Caco-2 (cell line): ENCODE measurements at regions of chr10 and their contacts with region 1.

Region 1: DNA sequence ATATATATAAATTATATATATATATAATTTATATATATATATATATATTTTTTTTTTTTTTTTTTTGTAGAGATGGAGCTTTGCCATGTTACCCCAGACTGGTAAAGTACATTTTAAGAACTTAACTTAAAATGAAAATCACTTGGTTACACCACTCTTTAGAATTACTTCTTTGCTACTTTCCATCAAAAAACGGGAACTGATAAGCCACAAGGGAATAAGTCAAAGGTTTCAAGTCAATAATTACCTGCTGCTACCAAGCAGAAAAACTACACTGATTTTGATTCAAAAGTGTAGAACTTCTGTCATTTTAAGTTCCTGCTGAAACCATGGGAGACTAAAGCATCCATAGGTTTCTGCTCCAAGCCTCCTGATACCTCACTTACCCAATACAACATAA is 12.2 kb downstream of the PPA1 start:
- DNase-seq: no peak
- H3K4me3 ChIP-seq: no peak overlapping the region
- H3K4me3 Mint-ChIP-seq: no peak overlapping the region
- H3K27ac Mint-ChIP-seq: peak overlapping the region; percentile 19
- H3K4me1 ChIP-seq: peaks cover 12% of the 10 kb centered on the region; the same call in 1 of the 2 replicates
- H3K4me1 Mint-ChIP-seq: peaks cover 14% of the 10 kb centered on the region
- H3K27me3 ChIP-seq: no peaks in the 10 kb centered on the region
- H3K27me3 Mint-ChIP-seq: no peaks in the 10 kb centered on the region
- CTCF ChIP-seq: no peak

Region 2: GRCh38 chr10:70233109-70233938 is 12.3 kb after region 1 on chr10 and contains the start of gene PPA1:
- CTCF ChIA-PET with region 1: interaction called, 80 read pairs
- POLR2A ChIA-PET with region 1: interaction called, 12 read pairs
- intact Hi-C with region 1: no loop called
- DNase-seq: peak; percentile 99 to 100
- H3K4me3 ChIP-seq: peak within 1 kb of the TSS; percentile 85
- H3K4me3 Mint-ChIP-seq: peak within 1 kb of the TSS; percentile 76
- H3K27ac Mint-ChIP-seq: peak within 1 kb of the TSS; percentile 99
- H3K4me1 ChIP-seq: peaks cover 19% of the 10 kb centered on the region
- H3K4me1 Mint-ChIP-seq: peaks cover 19% of the 10 kb centered on the region
- H3K27me3 ChIP-seq: no peaks in the 10 kb centered on the region
- H3K27me3 Mint-ChIP-seq: no peaks in the 10 kb centered on the region
- CTCF ChIP-seq: peak; percentile 56 to 81
- total RNA-seq, gene PPA1: 350 and 353 TPM in 2 replicates

Region 3: GRCh38 chr10:70272925-70273316 is 51.9 kb after region 1 on chr10:
- CTCF ChIA-PET with region 1: interaction called, 14 read pairs
- POLR2A ChIA-PET with region 1: no interaction called
- intact Hi-C with region 1: no loop called
- DNase-seq: no peak
- H3K4me3 ChIP-seq: no peak overlapping the region
- H3K4me3 Mint-ChIP-seq: no peak overlapping the region
- H3K27ac Mint-ChIP-seq: no peak overlapping the region
- H3K4me1 ChIP-seq: no peaks in the 10 kb centered on the region; the same call in 1 of the 2 replicates
- H3K4me1 Mint-ChIP-seq: no peaks in the 10 kb centered on the region
- H3K27me3 ChIP-seq: no peaks in the 10 kb centered on the region; the same call in 1 of the 2 replicates
- H3K27me3 Mint-ChIP-seq: no peaks in the 10 kb centered on the region
- CTCF ChIP-seq: peak; percentile 50 to 68

Region 4: DNA sequence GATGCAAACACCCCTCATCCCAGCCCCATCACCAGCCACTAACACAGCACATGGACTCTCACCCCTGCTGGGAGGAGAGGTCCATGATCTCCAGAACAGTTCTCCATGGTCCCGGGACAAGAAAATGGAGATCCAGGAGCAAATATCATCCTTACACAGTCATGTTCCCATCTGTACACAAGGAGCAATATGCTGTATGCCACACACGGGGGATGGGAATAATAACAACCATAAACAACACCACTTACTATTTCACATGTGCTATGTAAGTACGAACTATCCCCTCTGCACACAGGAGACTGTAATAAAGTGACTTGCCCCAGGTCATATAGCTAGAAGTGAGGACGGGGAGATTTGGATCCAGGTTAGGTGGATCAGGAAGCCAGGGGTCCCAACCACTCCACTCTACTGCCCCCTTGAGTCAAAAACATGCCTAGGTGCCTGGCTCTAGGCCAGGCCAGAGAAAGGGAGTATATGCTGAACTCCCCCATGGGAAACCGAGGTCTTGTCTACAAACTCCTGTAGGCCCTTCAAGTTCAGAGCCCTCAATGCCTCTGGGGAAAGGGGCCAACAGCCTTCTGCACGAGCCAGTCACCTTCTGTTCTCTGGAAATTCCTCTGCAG is 127.3 kb after region 1 on chr10:
- CTCF ChIA-PET with region 1: interaction called, 13 read pairs
- POLR2A ChIA-PET with region 1: no interaction called
- intact Hi-C with region 1: no loop called
- DNase-seq: peak in 1 of 2 experiments; percentile 68
- H3K4me3 ChIP-seq: no peak overlapping the region
- H3K4me3 Mint-ChIP-seq: no peak overlapping the region
- H3K27ac Mint-ChIP-seq: no peak overlapping the region
- H3K4me1 ChIP-seq: peaks cover 33% of the 10 kb centered on the region
- H3K4me1 Mint-ChIP-seq: peaks cover 18% of the 10 kb centered on the region
- H3K27me3 ChIP-seq: no peaks in the 10 kb centered on the region
- H3K27me3 Mint-ChIP-seq: no peaks in the 10 kb centered on the region
- CTCF ChIP-seq: peak; percentile 69 to 70

Region 5: DNA sequence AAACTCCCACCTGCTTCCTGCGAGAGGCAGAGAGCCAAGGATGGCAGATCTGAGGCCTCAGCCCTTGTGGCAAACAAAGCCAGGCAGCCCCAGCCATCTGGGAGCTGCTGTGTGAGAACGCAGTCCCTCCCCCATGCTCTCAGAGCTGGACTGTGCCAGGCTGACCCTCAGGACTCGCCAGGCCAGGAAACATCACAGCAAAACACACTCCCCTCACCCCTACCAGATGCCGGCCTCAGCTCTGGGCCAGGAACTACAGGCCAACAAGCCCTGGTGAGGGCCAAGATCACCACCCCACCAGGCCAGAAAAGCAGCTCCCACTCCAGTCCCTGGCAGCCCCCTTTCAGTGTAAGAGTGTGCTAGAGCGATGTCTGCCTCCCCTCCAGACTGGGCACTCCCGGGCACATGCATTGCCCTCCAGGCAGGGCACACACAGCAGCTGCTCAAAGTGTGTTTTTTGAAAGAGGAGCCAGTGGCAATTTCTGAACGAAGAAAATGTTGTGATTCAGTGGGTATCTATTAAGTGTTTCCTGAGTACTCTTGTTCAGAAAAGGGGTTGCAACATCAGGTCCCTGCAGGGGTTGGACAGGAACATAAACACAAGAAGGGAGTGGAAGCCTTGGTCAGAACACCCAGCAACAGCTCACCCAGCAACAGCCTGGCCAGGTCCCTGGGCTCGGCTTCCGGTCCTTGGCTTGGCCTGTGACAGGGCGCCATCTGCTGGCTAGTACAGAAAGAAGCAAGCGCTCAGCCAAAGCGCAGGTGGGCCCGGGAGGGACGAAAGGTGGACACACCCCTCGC is 143.1 kb after region 1 on chr10:
- CTCF ChIA-PET with region 1: interaction called, 284 read pairs
- POLR2A ChIA-PET with region 1: interaction called, 11 read pairs
- intact Hi-C with region 1: loop called (anchors 1 kb)
- DNase-seq: peak; percentile 94 to 97
- H3K4me3 ChIP-seq: no peak overlapping the region
- H3K4me3 Mint-ChIP-seq: no peak overlapping the region
- H3K27ac Mint-ChIP-seq: peak overlapping the region; percentile 33
- H3K4me1 ChIP-seq: peaks cover 16% of the 10 kb centered on the region
- H3K4me1 Mint-ChIP-seq: peaks cover 28% of the 10 kb centered on the region
- H3K27me3 ChIP-seq: no peaks in the 10 kb centered on the region
- H3K27me3 Mint-ChIP-seq: no peaks in the 10 kb centered on the region
- CTCF ChIP-seq: peak; percentile 98 to 99